ENCODE measurements at regions of chr2 and their contacts with region 1.

Region 1: DNA sequence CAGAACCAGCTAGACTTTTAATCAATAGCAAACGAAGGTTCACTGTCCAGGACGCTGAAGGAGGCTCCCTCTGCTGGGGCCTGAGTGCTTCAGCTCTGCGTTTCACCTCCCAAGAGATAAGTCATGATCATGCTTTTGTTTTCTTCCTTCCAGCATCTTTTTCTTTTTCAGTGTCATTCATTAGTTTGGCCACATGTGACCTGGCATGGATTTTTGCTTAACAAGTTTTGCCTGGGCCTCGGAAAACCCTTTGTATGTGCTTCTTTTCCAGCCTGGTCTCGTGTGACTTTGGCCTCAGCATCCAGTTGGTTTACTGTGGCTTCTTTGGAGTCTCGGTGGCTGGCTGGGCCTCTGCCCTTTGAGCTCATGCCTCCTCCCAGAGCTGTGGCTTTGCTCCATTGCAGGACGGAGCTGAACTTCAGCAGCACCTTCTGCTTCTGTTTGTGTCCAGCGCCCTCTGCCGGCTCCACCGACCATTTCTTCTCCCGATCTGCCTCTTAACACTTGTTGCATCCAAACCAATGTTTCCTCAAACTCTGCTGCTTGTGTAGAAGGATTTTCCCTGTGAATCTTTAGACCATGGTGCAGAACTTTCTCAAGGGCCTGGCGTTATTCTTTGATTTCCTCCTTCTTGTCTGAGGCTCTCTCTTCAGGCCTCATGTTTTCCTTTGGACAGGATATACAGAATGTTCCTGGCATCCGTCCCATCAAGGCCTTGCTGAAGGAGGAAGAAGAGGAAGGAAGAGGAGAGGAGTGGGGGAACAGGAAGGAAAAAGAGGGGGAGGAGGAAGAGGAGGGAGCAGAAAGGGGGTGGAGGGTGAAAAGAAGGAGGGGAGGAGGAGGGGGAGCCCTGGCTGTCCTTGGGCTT is 23.6 kb upstream of the HES6 start:
- DNase-seq: peak; percentile 89
- H3K4me3 ChIP-seq: no peak overlapping the region; a peak in 1 of 4 replicates
- H3K27ac ChIP-seq: 0 out of 4 replicates have a peak overlapping the region, but pooled peaks of 1 of the 2 experiments have one; percentile 11
- H3K4me1 ChIP-seq: peaks cover 0 to 16% of the 10 kb centered on the region in 2 experiments; a peak in 1 of 4 replicates
- H3K27me3 ChIP-seq: no peaks in the 10 kb centered on the region
- CTCF ChIP-seq: peak; percentile 90
- EP300 ChIP-seq: no peak
- RAD21 ChIP-seq: peak; percentile 91

Region 2: GRCh38 chr2:238158527-238159070 is 104.8 kb before region 1 on chr2 and contains the start of gene ERFE:
- CTCF ChIA-PET with region 1: interaction called, 58 read pairs
- POLR2A ChIA-PET with region 1: interaction called, 3 read pairs
- DNase-seq: peak; percentile 96
- H3K4me3 ChIP-seq: peak within 1 kb of the TSS; percentile 41 to 49; a peak in 3 of 4 replicates
- H3K27ac ChIP-seq: no peak within 1 kb of the TSS
- H3K4me1 ChIP-seq: peaks cover 2 to 4% of the 10 kb centered on the region in 2 experiments; a peak in 1 of 4 replicates
- H3K27me3 ChIP-seq: no peaks in the 10 kb centered on the region
- CTCF ChIP-seq: no peak
- EP300 ChIP-seq: no peak
- RAD21 ChIP-seq: no peak
- polyA plus RNA-seq, gene ERFE: 1.3 and 1.5 TPM in 2 replicates

Region 3: DNA sequence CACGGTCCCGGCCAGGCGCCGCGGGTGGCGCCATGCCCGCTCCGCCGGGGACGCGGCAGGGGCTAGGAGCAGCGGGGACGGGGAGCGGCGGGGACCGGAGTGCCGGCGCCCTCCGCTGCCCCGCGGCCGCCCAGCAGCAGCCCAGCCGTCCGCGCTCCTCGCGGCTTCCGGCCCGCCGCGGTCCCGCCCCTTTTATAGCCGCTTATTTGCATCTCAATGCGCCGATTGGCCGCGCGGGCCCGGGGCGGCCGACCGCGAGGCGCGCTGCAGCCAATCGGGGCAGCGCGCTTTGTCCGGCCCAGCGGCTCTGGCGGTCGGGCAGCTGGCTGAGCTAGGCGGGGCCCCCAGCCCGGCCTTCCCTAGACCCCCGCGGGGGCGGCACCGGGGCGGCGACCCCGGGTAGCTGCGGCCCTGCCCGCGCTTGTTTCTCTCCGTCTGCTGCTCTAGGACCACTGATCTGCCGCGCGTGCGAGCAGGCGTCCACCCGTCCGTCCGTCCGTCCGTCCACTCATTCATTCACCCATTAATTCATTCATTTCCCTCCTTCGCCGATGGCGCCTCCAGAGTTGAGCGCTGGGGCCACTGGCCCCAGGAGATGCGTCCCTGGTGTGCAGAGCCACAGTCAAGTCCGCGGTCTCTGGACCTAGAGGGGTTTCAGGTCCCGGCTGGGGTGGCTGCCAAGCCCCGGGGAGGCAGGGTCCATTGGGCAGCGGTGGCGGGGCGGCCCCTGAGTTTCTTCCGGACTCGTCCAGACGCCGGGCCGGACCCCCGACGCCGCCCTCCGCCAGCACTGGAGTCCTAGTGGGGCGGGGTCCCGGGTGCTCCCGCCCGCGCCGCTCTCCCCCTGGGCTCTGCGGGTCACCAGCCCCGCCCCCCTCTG is 23.3 kb before region 1 on chr2 and contains the start of gene HES6:
- CTCF ChIA-PET with region 1: interaction called, 17 read pairs
- POLR2A ChIA-PET with region 1: no interaction called
- DNase-seq: peak; percentile 98
- H3K4me3 ChIP-seq: peak within 1 kb of the TSS; percentile 54 to 74
- H3K27ac ChIP-seq: peak within 1 kb of the TSS in 1 of 2 experiments; percentile 83; a peak in 2 of 4 replicates
- H3K4me1 ChIP-seq: peaks cover 0 to 28% of the 10 kb centered on the region in 2 experiments; a peak in 1 of 4 replicates
- H3K27me3 ChIP-seq: no peaks in the 10 kb centered on the region; the same call in 1 of the 2 replicates
- CTCF ChIP-seq: no peak
- EP300 ChIP-seq: no peak
- RAD21 ChIP-seq: no peak
- polyA plus RNA-seq, gene HES6: 3.6 and 4.4 TPM in 2 replicates

Region 4: DNA sequence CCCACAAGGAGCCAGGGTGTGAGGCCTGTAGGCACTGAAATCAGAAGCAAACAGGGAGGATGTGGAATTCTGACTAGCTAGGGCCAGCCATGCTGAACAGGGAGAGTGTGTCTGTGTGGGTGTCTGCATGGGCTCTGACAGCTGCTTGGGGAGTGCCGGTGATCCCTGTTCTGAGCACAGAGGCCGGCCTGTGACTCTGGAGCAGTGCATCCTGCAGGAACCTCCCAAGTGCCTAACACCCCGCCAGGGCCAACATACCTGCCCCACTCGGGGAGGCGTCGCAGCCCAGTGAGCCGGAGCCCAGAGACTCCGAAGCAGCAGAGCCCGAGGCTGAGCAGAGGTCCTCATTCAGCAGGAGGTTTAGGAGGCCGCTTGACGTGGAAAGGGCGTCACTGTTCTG is 12.1 kb before region 1 on chr2:
- CTCF ChIA-PET with region 1: interaction called, 60 read pairs
- POLR2A ChIA-PET with region 1: no interaction called
- DNase-seq: no peak
- H3K4me3 ChIP-seq: no peak overlapping the region
- H3K27ac ChIP-seq: no peak overlapping the region
- H3K4me1 ChIP-seq: peaks cover 0 to 7% of the 10 kb centered on the region in 2 experiments; a peak in 1 of 4 replicates
- H3K27me3 ChIP-seq: no peaks in the 10 kb centered on the region
- CTCF ChIP-seq: no peak
- EP300 ChIP-seq: no peak
- RAD21 ChIP-seq: no peak

Region 5: GRCh38 chr2:238277695-238278094 is 14.3 kb after region 1 on chr2:
- CTCF ChIA-PET with region 1: interaction called, 72 read pairs
- POLR2A ChIA-PET with region 1: no interaction called
- DNase-seq: no peak
- H3K4me3 ChIP-seq: no peak overlapping the region
- H3K27ac ChIP-seq: no peak overlapping the region
- H3K4me1 ChIP-seq: no peaks in the 10 kb centered on the region
- H3K27me3 ChIP-seq: no peaks in the 10 kb centered on the region
- CTCF ChIP-seq: no peak; the same call in 1 of the 2 replicates
- EP300 ChIP-seq: no peak
- RAD21 ChIP-seq: no peak

Region 6: DNA sequence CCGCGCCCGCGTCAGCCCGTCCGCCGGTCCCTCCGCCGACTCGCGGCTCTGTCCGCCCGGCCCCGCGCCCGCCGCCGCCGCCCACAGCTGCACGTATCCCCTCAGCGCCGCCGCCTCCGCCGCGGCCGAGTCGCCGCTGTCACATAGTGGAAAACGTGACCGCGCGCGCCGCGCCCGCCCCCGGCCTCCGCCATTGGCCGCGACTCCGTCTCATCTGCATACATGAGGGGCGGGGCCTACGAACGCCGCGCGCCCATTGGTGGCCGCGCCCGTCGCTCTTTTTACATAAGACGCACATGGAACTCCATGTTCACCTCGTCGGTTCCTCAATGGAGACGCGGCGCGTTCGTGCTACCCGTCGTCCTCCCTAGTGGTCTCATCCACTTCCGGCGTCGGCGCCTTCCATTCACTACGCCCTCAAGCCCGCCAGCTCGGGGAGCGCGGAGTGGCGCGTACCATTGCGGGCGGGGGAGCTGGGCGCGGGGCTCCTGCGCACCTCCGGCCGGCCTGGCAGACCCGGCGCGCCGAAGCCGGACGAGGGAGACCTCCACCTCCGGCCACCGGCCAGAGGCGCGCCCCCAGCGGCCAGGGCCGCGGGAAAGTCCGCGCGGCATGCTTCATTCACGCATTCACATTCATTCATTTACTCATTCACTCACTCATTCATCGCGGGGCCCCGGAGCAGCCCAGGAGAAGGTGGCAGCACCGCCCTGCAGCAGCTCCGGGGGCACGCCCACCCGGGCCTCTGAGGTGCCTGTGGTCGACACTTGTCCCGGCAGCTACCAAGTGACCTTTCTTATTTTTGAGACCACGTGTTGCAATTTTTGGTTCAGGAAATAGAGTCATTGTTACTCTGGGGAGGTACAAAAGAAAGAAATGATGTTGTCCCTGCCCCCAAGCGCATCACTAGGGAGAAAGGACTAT is 25.5 kb after region 1 on chr2:
- CTCF ChIA-PET with region 1: interaction called, 28 read pairs
- POLR2A ChIA-PET with region 1: no interaction called
- DNase-seq: peak; percentile 98
- H3K4me3 ChIP-seq: peak overlapping the region; percentile 74 to 75
- H3K27ac ChIP-seq: peak overlapping the region in 1 of 2 experiments; percentile 67; a peak in 1 of 4 replicates
- H3K4me1 ChIP-seq: peaks cover 8 to 15% of the 10 kb centered on the region in 2 experiments; a peak in 3 of 4 replicates
- H3K27me3 ChIP-seq: no peaks in the 10 kb centered on the region; the same call in 1 of the 2 replicates
- CTCF ChIP-seq: peak; percentile 52
- EP300 ChIP-seq: 0 out of 4 replicates have a peak, but pooled peaks of 1 of the 2 experiments have one; percentile 15
- RAD21 ChIP-seq: no peak

Region 7: DNA sequence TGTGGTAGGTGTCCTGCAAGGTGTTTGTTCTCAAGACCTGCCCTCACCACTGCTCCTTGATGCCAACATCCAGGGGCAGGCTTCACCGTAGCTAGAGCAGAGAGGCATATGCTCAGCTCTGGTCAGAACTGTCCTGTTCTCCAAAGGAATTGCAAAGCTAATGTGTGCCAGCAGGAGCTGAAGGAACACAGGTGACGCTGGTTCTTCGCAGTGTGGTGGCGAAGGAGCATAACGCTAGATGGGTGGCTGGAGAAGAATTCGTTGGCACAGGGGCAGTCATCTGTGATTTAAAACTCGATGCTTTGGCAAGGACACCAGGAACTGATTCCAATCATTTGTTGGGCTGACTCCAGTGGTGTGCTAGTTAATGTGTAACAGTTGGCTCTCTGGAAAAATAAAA is 36.4 kb after region 1 on chr2:
- CTCF ChIA-PET with region 1: no interaction called
- POLR2A ChIA-PET with region 1: no interaction called
- DNase-seq: no peak
- H3K4me3 ChIP-seq: no peak overlapping the region
- H3K27ac ChIP-seq: no peak overlapping the region
- H3K4me1 ChIP-seq: no peaks in the 10 kb centered on the region; a peak in 1 of 4 replicates
- H3K27me3 ChIP-seq: no peaks in the 10 kb centered on the region
- CTCF ChIP-seq: no peak
- EP300 ChIP-seq: no peak
- RAD21 ChIP-seq: no peak

Region 8: GRCh38 chr2:238339395-238340213 is 76.2 kb after region 1 on chr2:
- CTCF ChIA-PET with region 1: interaction called, 11 read pairs
- POLR2A ChIA-PET with region 1: no interaction called
- DNase-seq: peak; percentile 48
- H3K4me3 ChIP-seq: no peak overlapping the region
- H3K27ac ChIP-seq: no peak overlapping the region
- H3K4me1 ChIP-seq: no peaks in the 10 kb centered on the region
- H3K27me3 ChIP-seq: no peaks in the 10 kb centered on the region
- CTCF ChIP-seq: no peak
- EP300 ChIP-seq: no peak
- RAD21 ChIP-seq: peak; percentile 13; the same call in 1 of the 2 replicates